Psoas muscle (tissue), 8 donors: ENCODE measurements at regions of chr2 and their contacts with region 1.

Region 1: GRCh38 chr2:170928824-170929685 is at the start of gene GORASP2:
- DNase-seq: peak; percentile 98 to 99
- ATAC-seq: peak; percentile 95 to 98 (median 97)
- H3K4me3 ChIP-seq: peak within 1 kb of the TSS; percentile 94
- H3K27ac ChIP-seq: peak within 1 kb of the TSS; percentile 98
- H3K4me1 ChIP-seq: peaks cover 35% of the 10 kb centered on the region
- H3K27me3 ChIP-seq: no peaks in the 10 kb centered on the region
- CTCF ChIP-seq: peak; percentile 94
- total RNA-seq, gene GORASP2: 46.6 to 64.4 (median 53.2) TPM

Region 2: GRCh38 chr2:170996316-170996715 is 67.3 kb after region 1 on chr2:
- intact Hi-C with region 1: no loop called
- DNase-seq: no peak
- ATAC-seq: no peak
- H3K4me3 ChIP-seq: no peak overlapping the region
- H3K27ac ChIP-seq: no peak overlapping the region
- H3K4me1 ChIP-seq: no peaks in the 10 kb centered on the region
- H3K27me3 ChIP-seq: no peaks in the 10 kb centered on the region
- CTCF ChIP-seq: no peak

Region 3: DNA sequence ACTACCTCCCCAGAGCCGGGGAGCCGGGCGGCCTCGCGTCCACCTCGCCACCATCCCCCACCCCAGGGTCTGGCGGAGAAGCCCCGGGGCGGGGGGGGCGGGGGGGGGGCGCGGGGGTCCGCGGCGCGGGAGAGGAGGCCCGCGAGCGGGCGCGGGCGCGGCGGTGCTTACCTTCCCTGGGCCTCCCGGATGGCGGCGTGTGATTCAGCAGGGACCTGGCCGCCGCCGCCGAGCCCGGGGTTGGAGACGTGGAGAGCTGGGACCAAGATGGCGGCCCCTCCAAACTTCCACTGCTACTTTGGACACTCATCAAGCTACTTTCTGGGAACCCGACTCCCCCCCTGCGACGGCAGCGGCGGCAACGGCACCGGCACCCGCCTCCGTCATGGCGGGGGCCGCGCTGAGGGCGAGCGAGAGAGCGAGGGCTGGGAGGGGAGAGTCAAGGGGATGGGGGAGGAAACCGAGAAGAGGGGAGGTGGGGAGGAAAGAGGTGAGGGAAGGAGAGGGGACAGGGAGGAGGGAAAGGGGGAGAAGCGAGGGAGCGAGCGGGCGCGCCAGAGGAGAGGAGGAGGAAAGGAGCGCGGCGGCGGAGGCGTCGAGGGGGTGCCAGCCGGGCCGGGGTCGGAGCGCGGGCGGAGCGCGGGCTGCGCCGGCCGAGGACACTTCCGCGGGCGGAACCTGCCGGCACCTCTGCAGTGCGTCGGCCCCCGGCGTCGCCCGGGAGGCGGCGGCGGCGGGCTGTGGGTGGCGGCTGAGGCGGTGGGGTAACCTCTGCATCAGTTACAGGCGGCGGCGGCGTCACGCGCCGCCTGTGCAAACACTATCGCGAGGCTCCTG is 231.3 kb after region 1 on chr2 and contains the start of gene TLK1:
- intact Hi-C with region 1: loop called in 1 of 2 experiments (anchors 5 kb)
- DNase-seq: peak; percentile 77 to 86
- ATAC-seq: peak; percentile 82 to 89 (median 86)
- H3K4me3 ChIP-seq: peak within 1 kb of the TSS; percentile 82
- H3K27ac ChIP-seq: peak within 1 kb of the TSS; percentile 93
- H3K4me1 ChIP-seq: peaks cover 26% of the 10 kb centered on the region
- H3K27me3 ChIP-seq: no peaks in the 10 kb centered on the region
- CTCF ChIP-seq: no peak
- total RNA-seq, gene TLK1: 17.5 to 22.2 (median 20.6) TPM

Region 4: DNA sequence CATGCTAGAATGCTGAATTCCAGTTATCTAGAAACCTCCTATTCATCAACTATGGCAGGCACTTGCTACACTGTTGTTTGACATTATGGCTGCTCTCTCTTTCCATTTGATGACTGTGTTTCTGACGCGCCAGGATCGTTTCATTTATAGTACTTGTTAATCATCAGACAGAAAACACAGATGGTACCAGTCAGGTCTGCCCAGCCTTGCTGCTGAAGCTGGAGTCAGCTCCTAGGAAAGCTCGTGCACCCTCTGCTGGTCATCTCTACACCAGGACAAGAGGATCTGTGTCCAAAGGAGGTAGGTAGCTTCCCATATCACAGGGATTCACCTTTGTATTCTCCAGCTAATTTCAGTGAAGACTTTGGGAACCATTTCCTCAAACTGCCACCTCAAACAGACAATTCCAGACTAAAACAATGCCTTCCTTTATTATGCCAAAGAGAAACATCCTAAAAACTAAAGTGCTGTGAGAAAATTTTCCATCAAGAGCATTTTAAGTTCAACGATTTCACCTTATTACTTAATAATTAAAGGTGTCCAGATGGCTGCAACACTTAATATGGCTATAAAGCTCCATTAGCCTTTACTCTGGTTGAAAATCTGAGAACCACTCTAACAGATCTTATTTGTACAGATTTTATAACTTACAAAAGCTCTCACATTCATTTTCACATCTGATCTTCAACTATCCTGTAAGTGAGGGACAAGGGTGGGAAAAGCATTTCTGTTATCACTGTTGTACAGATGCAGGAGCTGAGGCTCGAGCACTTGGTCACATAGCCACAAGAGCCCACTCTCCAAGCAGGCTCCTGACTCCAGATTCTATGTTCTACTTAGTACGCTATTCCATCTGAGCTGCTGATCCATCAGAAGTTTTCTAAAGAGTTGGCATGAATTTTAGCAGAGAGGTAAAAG is 487.2 kb after region 1 on chr2:
- intact Hi-C with region 1: loop called in 1 of 2 experiments (anchors 2 kb)
- DNase-seq: peak; percentile 79 to 88
- ATAC-seq: peak; percentile 97 to 100 (median 98)
- H3K4me3 ChIP-seq: no peak overlapping the region
- H3K27ac ChIP-seq: peak overlapping the region; percentile 48
- H3K4me1 ChIP-seq: peaks cover 5% of the 10 kb centered on the region
- H3K27me3 ChIP-seq: no peaks in the 10 kb centered on the region
- CTCF ChIP-seq: peak; percentile 80